HepG2 (cell line): ENCODE measurements at regions of chr2 and their contacts with region 1.

Region 1: DNA sequence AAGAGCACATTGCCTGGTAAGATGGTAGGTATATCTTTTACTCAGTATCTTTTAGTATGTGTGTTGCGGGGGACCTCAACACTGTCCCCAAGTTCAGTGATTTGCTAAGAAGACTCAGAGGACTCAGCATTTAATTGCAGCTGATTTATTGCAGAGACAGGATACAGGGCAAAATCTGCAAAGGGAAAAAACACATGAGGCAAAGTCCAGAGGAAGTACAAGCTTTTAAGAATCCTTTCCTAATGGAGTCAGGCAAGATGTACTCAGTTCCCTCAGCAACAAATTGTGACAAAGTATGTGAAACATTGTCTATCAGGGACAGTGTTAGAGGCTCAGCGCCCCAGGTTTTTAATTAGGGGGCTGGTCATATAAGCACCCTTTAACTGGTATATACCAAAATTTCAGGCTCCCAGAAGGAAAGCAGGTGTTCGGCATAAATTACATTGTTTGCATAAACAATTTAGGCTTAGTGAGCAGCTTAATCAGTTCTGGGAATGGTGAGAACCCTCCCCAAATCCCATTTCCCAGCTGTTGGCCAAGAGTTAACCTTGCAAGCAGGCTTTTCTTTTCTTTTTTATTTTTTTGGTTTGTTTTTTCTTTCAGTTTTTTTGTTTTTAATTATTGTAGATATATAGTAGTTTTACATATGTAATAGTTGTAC is 41.7 kb downstream of the RAB3GAP1 start:
- DNase-seq: peak; percentile 38
- ATAC-seq: peak; percentile 46
- H3K4me3 ChIP-seq: no peak overlapping the region
- H3K27ac ChIP-seq: peak overlapping the region; percentile 43
- H3K4me1 ChIP-seq: peaks cover 45% of the 10 kb centered on the region
- H3K27me3 ChIP-seq: no peaks in the 10 kb centered on the region
- CTCF ChIP-seq: no peak
- EP300 ChIP-seq: no peak
- POLR2A ChIP-seq: no peak
- RAD21 ChIP-seq: no peak

Region 2: DNA sequence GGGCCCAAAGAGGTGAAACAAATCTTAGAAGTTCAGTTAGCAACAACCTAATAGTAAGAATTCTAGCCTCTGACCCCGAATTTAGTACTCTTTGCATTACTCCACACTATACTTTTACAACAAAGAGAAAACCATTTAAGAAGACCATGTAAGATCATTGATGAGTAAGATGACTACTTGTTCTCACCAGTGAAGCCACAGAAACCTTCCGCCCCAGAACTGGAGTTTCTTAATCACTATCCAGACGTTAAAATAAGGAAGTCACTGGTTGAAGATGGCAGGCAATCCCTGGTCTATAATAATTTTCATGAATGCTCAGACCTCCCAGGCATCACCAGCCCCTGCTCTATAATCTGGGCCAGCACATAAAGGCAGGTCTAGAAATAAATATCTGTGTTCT is 470.0 kb before region 1 on chr2:
- CTCF ChIA-PET with region 1: no interaction called
- POLR2A ChIA-PET with region 1: no interaction called
- in situ Hi-C with region 1: no loop called
- intact Hi-C with region 1: no loop called
- DNase-seq: no peak
- ATAC-seq: no peak
- H3K4me3 ChIP-seq: no peak overlapping the region
- H3K27ac ChIP-seq: no peak overlapping the region
- H3K4me1 ChIP-seq: no peaks in the 10 kb centered on the region
- H3K27me3 ChIP-seq: peaks cover 0 to 9% of the 10 kb centered on the region in 2 experiments; a peak in 2 of 5 replicates
- CTCF ChIP-seq: no peak
- EP300 ChIP-seq: no peak
- POLR2A ChIP-seq: no peak
- RAD21 ChIP-seq: no peak

Region 3: GRCh38 chr2:135052042-135052876 is 41.5 kb before region 1 on chr2 and contains the start of gene RAB3GAP1:
- CTCF ChIA-PET with region 1: no interaction called
- POLR2A ChIA-PET with region 1: no interaction called
- in situ Hi-C with region 1: no loop called
- intact Hi-C with region 1: loop called (anchors 5 kb)
- DNase-seq: peak; percentile 72
- ATAC-seq: peak; percentile 85
- H3K4me3 ChIP-seq: peak within 1 kb of the TSS; percentile 76 to 85 (median 77)
- H3K27ac ChIP-seq: peak within 1 kb of the TSS; percentile 88
- H3K4me1 ChIP-seq: peaks cover 76% of the 10 kb centered on the region
- H3K27me3 ChIP-seq: no peaks in the 10 kb centered on the region; a peak in 1 of 5 replicates
- CTCF ChIP-seq: no peak
- EP300 ChIP-seq: no peak
- POLR2A ChIP-seq: peak; percentile 91 to 97
- RAD21 ChIP-seq: no peak
- total RNA-seq, gene RAB3GAP1: 48.8 and 61.5 TPM in 2 replicates

Region 4: DNA sequence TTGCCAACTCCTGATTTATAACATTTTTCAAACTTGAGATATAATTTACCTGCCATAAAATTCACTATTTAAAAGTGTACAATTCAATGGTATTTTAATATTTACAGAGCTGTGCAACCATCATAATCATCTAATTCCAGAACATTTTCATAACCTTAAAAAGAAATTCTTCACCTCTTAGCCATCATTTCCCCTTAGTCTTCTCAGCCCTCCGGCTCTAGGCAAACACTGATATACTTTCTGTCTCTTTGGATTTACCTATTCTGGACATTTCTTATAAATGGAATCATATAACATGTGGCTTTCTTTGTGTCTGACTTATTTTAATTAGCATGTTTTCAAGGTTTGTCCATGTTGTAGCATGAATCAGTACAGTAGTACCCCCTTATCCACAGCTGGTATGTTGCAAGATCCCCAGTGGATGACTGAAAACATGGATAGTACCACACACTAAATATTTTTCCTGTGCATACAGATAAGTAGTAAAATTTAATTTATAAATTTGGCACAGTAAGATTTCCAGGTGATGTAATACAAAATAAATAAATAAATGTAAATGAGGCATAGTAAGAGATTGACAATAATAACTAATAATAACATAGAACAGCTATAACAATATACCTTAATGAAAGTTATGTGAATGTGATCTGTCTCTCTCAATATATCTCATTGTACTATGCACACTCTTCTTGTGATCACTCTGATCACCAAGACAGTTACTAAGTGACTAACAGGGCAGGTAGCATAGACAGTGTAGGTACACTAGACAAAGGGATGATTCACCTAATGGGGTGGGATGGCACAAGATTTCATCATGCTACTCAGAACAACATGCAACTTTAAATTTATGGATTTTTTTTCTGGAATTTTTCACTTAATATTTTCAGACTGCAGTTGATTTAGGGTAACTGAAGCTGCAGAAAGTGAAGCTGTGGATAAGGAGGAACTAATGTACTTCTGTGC is 31.4 kb after region 1 on chr2:
- CTCF ChIA-PET with region 1: no interaction called
- POLR2A ChIA-PET with region 1: no interaction called
- in situ Hi-C with region 1: no loop called
- intact Hi-C with region 1: loop called (anchors 1 kb)
- DNase-seq: no peak
- ATAC-seq: peak; percentile 57
- H3K4me3 ChIP-seq: no peak overlapping the region
- H3K27ac ChIP-seq: no peak overlapping the region
- H3K4me1 ChIP-seq: no peaks in the 10 kb centered on the region
- H3K27me3 ChIP-seq: no peaks in the 10 kb centered on the region
- CTCF ChIP-seq: no peak
- EP300 ChIP-seq: no peak
- POLR2A ChIP-seq: no peak
- RAD21 ChIP-seq: no peak

Region 5: DNA sequence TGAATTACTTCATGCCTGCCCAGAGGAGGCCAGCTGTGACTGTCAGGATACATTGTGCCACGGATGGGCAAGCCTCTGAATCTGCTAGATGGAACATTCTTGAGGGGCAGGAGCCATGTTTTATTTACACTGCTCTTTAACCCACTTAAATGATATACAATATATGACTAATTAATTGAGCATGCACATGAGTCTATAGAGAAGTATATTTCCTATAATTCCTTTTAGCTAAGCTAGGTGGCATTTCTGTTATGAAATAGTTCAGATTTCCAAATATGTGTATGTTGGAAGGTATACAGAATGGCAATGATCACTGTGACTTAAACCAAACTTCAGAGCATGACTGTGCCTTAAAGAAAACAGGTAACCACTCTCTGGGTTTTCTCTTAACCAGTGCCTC is 90.0 kb after region 1 on chr2:
- CTCF ChIA-PET with region 1: no interaction called
- POLR2A ChIA-PET with region 1: no interaction called
- in situ Hi-C with region 1: no loop called
- intact Hi-C with region 1: no loop called
- DNase-seq: no peak
- ATAC-seq: no peak
- H3K4me3 ChIP-seq: no peak overlapping the region
- H3K27ac ChIP-seq: no peak overlapping the region
- H3K4me1 ChIP-seq: no peaks in the 10 kb centered on the region
- H3K27me3 ChIP-seq: no peaks in the 10 kb centered on the region
- CTCF ChIP-seq: no peak
- EP300 ChIP-seq: no peak
- POLR2A ChIP-seq: no peak
- RAD21 ChIP-seq: no peak

Region 6: DNA sequence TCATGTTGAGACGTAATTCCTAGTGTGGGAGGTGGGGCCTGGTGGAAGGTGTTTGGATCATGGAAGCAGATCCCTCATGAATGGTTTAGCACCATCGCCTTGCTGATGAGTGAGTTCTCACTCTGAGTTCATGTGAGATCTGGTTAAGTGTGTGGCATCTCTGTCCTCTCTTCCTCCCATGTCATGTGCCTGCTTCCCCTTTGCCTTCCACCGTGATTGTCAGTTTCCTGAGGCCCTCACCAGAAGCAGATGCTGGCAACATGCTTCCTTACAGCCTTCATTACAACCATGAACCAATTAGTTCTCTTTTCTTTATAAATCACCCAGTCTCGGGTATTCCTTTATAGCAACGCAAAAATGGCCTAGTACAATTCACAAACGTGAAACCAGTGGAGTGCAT is 797.0 kb after region 1 on chr2:
- CTCF ChIA-PET with region 1: no interaction called
- POLR2A ChIA-PET with region 1: no interaction called
- in situ Hi-C with region 1: no loop called
- intact Hi-C with region 1: no loop called
- DNase-seq: no peak
- ATAC-seq: no peak
- H3K4me3 ChIP-seq: no peak overlapping the region
- H3K27ac ChIP-seq: no peak overlapping the region
- H3K4me1 ChIP-seq: no peaks in the 10 kb centered on the region
- H3K27me3 ChIP-seq: peaks cover 0 to 4% of the 10 kb centered on the region in 2 experiments; a peak in 2 of 5 replicates
- CTCF ChIP-seq: no peak
- EP300 ChIP-seq: no peak
- POLR2A ChIP-seq: no peak
- RAD21 ChIP-seq: no peak

Region 7: DNA sequence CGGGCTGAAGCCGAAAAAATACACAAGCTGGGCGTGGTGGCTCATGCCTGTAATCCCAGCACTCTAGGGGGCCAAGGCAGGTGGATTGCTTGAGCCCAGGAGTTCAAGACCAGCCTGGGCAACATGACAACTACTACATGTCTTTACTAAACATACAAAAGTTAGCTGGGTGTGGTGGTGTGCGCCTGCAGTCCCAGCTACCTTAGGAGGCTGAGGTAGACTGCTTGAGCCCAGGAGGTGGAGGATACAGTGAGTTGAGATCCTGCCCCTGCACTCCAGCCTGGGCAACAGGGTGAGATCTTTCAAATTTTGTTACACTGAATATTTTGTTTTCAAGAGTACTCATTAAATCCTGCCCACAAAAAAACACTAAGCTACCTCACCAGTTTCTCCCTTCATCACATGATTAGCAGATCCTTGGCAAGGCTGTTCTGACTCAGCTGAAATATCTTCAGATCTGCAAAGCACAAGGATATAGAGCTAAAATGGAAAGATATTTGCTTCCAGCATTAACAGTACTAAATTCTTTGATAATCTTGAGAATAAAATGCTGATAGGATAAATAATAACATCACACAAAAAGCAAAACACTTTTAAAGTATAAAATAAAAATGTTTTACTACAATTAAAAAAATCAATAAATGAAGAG is 810.7 kb after region 1 on chr2:
- CTCF ChIA-PET with region 1: no interaction called
- POLR2A ChIA-PET with region 1: no interaction called
- in situ Hi-C with region 1: no loop called
- intact Hi-C with region 1: no loop called
- DNase-seq: no peak
- ATAC-seq: peak; percentile 35
- H3K4me3 ChIP-seq: no peak overlapping the region
- H3K27ac ChIP-seq: no peak overlapping the region
- H3K4me1 ChIP-seq: peaks cover 5% of the 10 kb centered on the region; the same call in 1 of the 2 replicates
- H3K27me3 ChIP-seq: no peaks in the 10 kb centered on the region
- CTCF ChIP-seq: no peak
- EP300 ChIP-seq: no peak
- POLR2A ChIP-seq: no peak
- RAD21 ChIP-seq: no peak